ENCODE measurements at regions of chr20 and their contacts with region 1.

Region 1: DNA sequence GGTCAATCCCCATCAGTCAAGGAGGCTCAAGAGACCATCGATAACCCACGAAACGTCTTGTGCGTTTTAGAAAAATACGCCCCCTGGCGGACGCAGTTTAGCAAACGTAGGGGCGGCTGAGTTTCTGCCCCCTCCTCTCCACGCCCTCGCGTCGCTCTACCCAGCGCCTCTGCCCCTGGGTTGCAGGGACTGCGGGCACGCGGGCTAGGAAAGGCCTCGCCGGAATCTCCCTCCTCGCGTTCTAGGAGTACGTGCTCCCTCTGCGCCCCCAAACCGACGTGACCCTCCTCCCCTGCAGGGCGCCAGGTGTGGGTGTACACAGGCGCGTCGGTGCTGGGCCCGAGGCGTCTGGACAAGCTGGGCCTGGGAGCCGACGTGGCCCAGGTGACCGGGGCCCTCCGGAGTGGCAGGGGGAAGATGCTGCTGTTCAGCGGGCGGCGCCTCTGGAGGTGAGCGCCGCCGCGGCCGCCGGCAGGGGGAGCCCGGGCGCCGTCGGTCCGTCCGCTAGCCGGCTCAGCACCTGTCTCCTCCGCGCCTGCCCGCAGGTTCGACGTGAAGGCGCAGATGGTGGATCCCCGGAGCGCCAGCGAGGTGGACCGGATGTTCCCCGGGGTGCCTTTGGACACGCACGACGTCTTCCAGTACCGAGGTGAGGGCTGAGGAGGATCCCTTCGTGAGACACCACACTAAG is 5.3 kb downstream of the MMP9 start:
- DNase-seq: peak; percentile 85
- CTCF ChIP-seq: peak; percentile 82

Region 2: DNA sequence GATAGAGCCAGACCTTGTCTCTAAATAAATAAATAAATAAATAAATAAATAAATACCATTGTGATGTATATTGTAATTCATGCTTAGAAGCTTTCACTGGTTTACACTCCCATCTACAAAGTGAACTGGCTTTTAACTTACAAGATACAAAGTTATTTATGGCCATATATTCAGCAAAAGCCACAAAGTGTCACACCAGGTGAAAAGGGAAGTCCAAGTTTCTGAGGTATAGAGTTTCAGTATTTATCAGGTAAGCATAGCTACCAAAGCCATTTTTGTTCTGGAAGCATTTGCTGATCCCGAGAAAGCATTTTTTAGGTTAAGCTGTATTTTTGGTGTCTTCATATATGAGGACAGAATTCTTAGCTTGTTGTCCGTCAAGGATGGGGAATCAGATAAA is 1453.7 kb before region 1 on chr20:
- CTCF ChIA-PET with region 1: no interaction called
- POLR2A ChIA-PET with region 1: no interaction called
- DNase-seq: no peak
- CTCF ChIP-seq: no peak

Region 3: DNA sequence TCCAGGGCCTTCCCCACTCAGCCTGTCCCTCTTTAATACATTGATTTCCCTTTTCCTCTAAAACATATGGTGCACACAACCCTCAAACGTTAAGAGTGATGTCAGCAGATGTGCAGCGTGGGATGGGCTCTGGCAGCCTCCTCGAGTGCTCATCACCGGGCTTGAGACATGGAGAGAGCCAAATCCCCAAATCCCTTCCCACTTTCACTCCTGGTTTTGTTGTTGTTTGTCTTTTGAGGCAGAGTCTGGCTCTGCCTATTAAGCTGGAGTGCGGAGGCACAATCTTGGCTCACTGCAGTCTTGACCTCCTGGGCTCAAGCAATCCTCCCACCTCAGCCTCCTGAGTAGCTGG is 96.2 kb before region 1 on chr20:
- CTCF ChIA-PET with region 1: no interaction called
- POLR2A ChIA-PET with region 1: no interaction called
- DNase-seq: no peak
- CTCF ChIP-seq: no peak

Region 4: DNA sequence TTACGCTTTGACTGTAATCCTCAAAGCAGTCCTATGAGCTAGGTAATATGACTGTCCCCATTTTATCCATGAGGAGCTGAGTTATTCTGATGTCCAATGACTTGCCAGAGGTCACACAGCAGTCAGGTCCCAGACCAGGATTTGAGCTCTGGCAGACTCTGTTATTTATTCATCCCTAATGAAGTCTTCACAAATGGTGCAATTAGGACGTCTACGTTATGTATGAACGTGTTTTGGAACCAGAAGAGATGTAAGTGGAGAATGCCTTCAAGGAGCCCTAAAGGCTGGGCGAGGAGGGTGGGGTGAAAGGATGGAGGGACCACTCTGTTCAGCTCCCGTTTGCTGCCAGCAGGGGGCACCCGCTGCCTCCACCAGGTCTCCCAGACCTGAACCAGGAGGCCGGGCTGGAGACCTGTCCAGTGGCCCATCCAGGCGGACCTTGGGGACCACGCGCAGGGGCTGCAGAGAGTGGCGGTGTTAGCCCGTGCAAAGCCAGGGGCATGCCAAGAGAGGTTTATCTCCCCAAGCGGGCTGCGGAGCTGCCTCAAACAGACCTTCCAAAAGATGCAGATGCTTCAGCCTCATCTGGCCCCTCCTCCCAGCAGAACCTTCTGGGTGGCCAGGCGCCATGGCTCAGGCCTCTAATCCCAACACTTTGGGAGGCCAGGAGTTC is 26.7 kb before region 1 on chr20:
- CTCF ChIA-PET with region 1: interaction called, 140 read pairs
- POLR2A ChIA-PET with region 1: no interaction called
- DNase-seq: peak; percentile 87
- CTCF ChIP-seq: peak; percentile 91

Region 5: GRCh38 chr20:45998761-45999160 is 15.2 kb before region 1 on chr20:
- CTCF ChIA-PET with region 1: interaction called, 45 read pairs
- POLR2A ChIA-PET with region 1: no interaction called
- DNase-seq: no peak
- CTCF ChIP-seq: no peak

Region 6: GRCh38 chr20:46031701-46032254 is 17.8 kb after region 1 on chr20:
- CTCF ChIA-PET with region 1: interaction called, 68 read pairs
- POLR2A ChIA-PET with region 1: no interaction called
- DNase-seq: no peak
- CTCF ChIP-seq: no peak

Region 7: DNA sequence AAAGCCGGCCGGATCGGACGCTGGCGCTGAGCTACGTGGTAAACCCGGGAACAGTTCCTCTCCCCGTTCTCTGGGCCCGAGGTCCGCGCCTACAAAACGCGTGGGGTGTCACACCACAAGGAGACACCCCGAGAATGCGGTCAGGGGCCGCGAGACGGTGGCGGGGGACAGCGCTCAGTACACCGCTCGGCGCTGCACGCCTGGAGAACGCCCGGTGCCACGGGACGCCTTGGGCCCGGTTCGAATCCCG is 75.1 kb after region 1 on chr20:
- CTCF ChIA-PET with region 1: interaction called, 14 read pairs
- POLR2A ChIA-PET with region 1: no interaction called
- DNase-seq: no peak
- CTCF ChIP-seq: no peak

Region 8: GRCh38 chr20:46108435-46108841 is 94.5 kb after region 1 on chr20:
- CTCF ChIA-PET with region 1: interaction called, 11 read pairs
- POLR2A ChIA-PET with region 1: no interaction called
- DNase-seq: peak; percentile 69
- CTCF ChIP-seq: peak; percentile 32

Region 9: DNA sequence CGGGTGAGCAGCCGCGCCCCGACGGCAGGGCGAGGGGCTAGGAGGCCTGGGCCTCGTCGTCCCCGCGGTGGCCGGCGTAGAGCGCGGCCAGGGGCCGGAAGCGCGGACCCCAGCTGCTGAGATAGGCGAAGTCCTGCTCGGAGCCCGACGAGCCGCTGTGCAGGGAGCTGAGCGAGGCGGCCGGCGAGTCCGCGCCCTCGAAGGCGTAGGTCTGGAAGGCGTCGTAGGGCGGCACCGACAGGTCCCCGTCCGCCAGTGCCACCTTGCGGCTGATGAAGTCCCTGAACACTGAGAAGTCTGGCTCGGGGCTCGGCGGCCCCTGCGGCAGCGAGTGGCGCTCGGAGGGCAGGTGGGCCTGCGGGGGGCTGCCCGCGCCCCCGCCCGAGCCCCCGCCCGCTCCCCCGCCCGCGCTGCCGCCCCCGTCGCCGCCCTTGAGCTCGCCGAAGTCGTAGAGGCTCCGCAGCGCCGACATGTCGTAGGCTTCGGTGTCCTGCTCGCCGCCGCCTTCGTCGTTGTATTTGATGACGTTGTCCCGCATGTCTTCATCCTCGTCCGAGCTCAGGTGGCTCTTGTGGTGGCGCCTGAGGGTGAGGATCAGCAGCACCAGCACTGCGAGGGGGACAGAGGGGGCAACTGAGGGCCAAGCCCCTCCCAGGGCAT is 160.6 kb after region 1 on chr20:
- CTCF ChIA-PET with region 1: interaction called, 45 read pairs
- POLR2A ChIA-PET with region 1: no interaction called
- DNase-seq: peak; percentile 91
- CTCF ChIP-seq: peak; percentile 88

Measured in GM10248 (cell line).